ENCODE measurements at regions of chr13 and their contacts with region 1.

Region 1: GRCh38 chr13:74726206-74726605 is 592.0 kb upstream of the KLF12 start:
- DNase-seq: no peak
- ATAC-seq: no peak
- H3K4me3 ChIP-seq: no peak overlapping the region
- H3K4me3 Mint-ChIP-seq: no peak overlapping the region
- H3K27ac ChIP-seq: no peak overlapping the region
- H3K27ac Mint-ChIP-seq: no peak overlapping the region
- H3K4me1 ChIP-seq: no peaks in the 10 kb centered on the region
- H3K4me1 Mint-ChIP-seq: no peaks in the 10 kb centered on the region
- H3K27me3 ChIP-seq: no peaks in the 10 kb centered on the region
- H3K27me3 Mint-ChIP-seq: peaks cover 0 to 8% of the 10 kb centered on the region in 2 donors

Region 2: GRCh38 chr13:74707291-74707690 is 18.9 kb before region 1 on chr13:
- CTCF ChIA-PET with region 1: no interaction called
- POLR2A ChIA-PET with region 1: interaction called in 1 of 2 experiments, 10 read pairs
- DNase-seq: no peak
- ATAC-seq: no peak
- H3K4me3 ChIP-seq: no peak overlapping the region
- H3K4me3 Mint-ChIP-seq: no peak overlapping the region
- H3K27ac ChIP-seq: no peak overlapping the region
- H3K27ac Mint-ChIP-seq: no peak overlapping the region
- H3K4me1 ChIP-seq: no peaks in the 10 kb centered on the region
- H3K4me1 Mint-ChIP-seq: no peaks in the 10 kb centered on the region
- H3K27me3 ChIP-seq: no peaks in the 10 kb centered on the region
- H3K27me3 Mint-ChIP-seq: peaks cover 1 to 19% of the 10 kb centered on the region in 2 donors